A549 (cell line): ENCODE measurements at regions of chr16 and their contacts with region 1.

Region 1: DNA sequence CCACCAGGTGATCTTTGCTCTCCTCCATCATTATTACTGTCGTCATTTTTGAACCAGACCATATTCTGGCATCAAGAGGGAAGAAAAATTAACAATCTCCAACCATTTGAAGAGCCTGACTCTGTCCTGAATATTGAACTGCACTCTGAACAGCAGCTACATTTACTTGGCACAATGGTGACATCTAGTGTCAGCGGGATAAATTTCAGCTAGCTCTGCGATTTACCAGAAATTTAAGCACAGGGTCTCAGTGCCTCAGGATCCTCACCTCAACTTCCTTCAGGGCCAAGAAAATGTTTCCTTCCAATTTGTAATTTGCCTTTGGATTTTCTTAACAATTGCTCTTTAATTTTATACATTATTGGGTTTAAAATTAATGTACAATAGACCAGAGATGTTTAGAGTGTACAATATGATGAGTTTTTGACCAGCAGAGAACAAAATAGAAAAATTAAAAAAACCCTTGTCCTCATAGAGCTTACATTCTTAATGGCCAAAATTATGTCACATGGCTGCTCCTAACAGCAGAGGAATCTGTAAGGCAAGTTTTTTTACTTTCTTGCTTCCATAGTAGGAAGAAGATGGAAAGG is 10.7 kb upstream of the ZNF19 start:
- DNase-seq: peak; percentile 65 to 67
- ATAC-seq: peak; percentile 75 to 90
- H3K4me3 ChIP-seq: no peak overlapping the region
- H3K27ac ChIP-seq: no peak overlapping the region
- H3K4me1 ChIP-seq: 0 out of 3 replicates have a peak, but pooled peaks cover under 1% of the 10 kb centered on the region
- CTCF ChIP-seq: peak; percentile 84
- EP300 ChIP-seq: no peak
- POLR2A ChIP-seq: no peak
- RAD21 ChIP-seq: peak; percentile 82 to 88

Region 2: GRCh38 chr16:71364133-71364681 is 135.7 kb before region 1 on chr16:
- CTCF ChIA-PET with region 1: interaction called, 12 read pairs
- POLR2A ChIA-PET with region 1: no interaction called
- DNase-seq: no peak
- ATAC-seq: no peak
- H3K4me3 ChIP-seq: no peak overlapping the region
- H3K27ac ChIP-seq: no peak overlapping the region
- H3K4me1 ChIP-seq: peaks cover 19% of the 10 kb centered on the region
- CTCF ChIP-seq: no peak
- EP300 ChIP-seq: no peak
- POLR2A ChIP-seq: no peak
- RAD21 ChIP-seq: no peak

Region 3: DNA sequence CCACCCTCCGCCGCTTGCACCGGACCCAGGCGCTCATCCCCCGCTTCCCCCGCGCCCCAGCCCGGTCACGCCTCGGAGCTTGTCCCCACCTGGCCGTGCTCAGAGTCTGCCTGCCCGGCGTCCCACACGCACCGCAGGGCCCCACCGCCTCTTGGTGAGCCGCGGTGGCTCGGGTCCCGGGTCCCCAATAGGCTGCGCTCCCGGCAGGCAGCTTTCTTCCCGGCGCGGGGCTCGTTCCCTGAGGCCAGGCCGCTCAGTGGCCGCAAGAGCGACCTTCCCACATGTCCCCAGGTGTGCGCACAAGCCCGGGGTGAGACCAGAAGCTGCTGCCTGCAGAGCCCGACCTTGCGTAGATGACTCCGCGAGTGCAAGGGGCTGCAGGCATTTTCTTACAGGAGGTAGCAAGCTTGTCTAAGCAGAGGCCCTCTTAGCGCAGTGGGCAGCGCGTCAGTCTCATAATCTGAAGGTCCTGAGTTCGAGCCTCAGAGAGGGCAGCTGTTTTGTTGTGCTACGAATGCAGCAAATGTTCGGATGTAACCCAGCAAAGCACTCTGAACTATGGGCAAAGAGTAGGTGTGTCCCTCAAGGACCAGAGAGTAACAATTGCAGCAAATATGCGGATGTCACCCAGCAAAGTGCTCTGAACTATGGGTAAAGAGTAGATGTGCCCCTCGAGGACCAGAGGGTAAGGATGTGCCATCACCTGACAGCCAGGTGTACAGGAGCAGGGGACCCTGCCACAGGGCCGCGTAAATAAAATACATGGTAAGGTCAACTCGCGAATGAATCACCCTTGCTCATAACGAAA is 73.6 kb before region 1 on chr16:
- CTCF ChIA-PET with region 1: interaction called, 10 read pairs
- POLR2A ChIA-PET with region 1: no interaction called
- DNase-seq: peak; percentile 97 to 98
- ATAC-seq: peak; percentile 94 to 97
- H3K4me3 ChIP-seq: peak overlapping the region; percentile 50
- H3K27ac ChIP-seq: peak overlapping the region; percentile 18 to 69; a peak in 2 of 6 replicates
- H3K4me1 ChIP-seq: peaks cover 5% of the 10 kb centered on the region; the same call in 1 of the 3 replicates
- CTCF ChIP-seq: no peak
- EP300 ChIP-seq: no peak
- POLR2A ChIP-seq: no peak
- RAD21 ChIP-seq: no peak

Region 4: GRCh38 chr16:71484006-71484893 is 15.6 kb before region 1 on chr16:
- CTCF ChIA-PET with region 1: interaction called, 25 read pairs
- POLR2A ChIA-PET with region 1: no interaction called
- DNase-seq: peak; percentile 84 to 95
- ATAC-seq: peak; percentile 97 to 98
- H3K4me3 ChIP-seq: peak overlapping the region; percentile 68
- H3K27ac ChIP-seq: peak overlapping the region; percentile 83 to 92
- H3K4me1 ChIP-seq: peaks cover 3% of the 10 kb centered on the region; the same call in 1 of the 3 replicates
- CTCF ChIP-seq: no peak
- EP300 ChIP-seq: no peak
- POLR2A ChIP-seq: peak; percentile 52
- RAD21 ChIP-seq: no peak

Region 5: DNA sequence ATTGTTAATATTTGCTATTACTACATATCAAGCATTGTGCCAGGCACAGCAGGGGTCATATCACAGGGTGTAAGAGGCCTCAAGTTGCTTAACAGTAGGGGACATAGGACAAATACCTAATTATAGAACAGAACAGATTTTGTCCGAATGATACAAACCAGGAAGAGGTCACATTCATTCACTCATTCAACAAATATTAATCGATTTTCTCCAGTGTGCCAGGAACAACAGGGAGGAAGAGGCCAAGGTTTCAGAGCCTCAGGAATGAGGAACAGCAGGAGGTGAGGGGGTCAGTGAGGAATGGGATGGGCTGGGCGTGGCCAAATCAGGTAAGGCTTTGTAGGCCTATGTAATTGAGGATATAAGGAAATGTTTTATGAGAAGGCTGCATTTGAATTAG is 15.2 kb after region 1 on chr16:
- CTCF ChIA-PET with region 1: interaction called, 16 read pairs
- POLR2A ChIA-PET with region 1: no interaction called
- DNase-seq: no peak
- ATAC-seq: no peak
- H3K4me3 ChIP-seq: no peak overlapping the region
- H3K27ac ChIP-seq: no peak overlapping the region
- H3K4me1 ChIP-seq: no peaks in the 10 kb centered on the region
- CTCF ChIP-seq: no peak
- EP300 ChIP-seq: no peak
- POLR2A ChIP-seq: no peak
- RAD21 ChIP-seq: no peak

Region 6: GRCh38 chr16:71532366-71532765 is 32.5 kb after region 1 on chr16:
- CTCF ChIA-PET with region 1: interaction called, 23 read pairs
- POLR2A ChIA-PET with region 1: no interaction called
- DNase-seq: no peak
- ATAC-seq: no peak
- H3K4me3 ChIP-seq: no peak overlapping the region
- H3K27ac ChIP-seq: no peak overlapping the region
- H3K4me1 ChIP-seq: no peaks in the 10 kb centered on the region
- CTCF ChIP-seq: no peak
- EP300 ChIP-seq: no peak
- POLR2A ChIP-seq: no peak
- RAD21 ChIP-seq: no peak

Region 7: DNA sequence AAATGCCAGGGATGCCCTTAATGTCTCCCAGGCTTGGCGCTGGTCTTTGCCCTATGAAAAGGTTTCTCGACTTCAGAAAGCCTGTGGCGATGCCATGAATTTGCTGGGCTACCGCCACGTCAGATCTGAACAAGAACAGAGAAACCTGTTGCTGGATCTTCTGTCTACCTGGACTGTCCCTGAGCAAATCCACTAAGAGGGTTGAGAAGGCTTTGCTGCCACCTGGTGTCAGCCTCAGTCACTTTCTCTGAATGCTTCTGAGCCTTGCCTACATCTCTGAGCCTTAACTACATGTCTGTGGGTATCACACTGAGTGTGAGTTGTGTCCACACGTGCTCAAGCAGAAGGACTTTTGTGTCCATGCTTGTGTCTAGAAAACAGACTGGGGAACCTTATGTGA is 37.8 kb after region 1 on chr16:
- CTCF ChIA-PET with region 1: interaction called, 14 read pairs
- POLR2A ChIA-PET with region 1: no interaction called
- DNase-seq: peak; percentile 63 to 64
- ATAC-seq: peak; percentile 92 to 93
- H3K4me3 ChIP-seq: no peak overlapping the region
- H3K27ac ChIP-seq: no peak overlapping the region
- H3K4me1 ChIP-seq: no peaks in the 10 kb centered on the region
- CTCF ChIP-seq: peak; percentile 63
- EP300 ChIP-seq: no peak
- POLR2A ChIP-seq: no peak
- RAD21 ChIP-seq: peak; percentile 61 to 71

Region 8: DNA sequence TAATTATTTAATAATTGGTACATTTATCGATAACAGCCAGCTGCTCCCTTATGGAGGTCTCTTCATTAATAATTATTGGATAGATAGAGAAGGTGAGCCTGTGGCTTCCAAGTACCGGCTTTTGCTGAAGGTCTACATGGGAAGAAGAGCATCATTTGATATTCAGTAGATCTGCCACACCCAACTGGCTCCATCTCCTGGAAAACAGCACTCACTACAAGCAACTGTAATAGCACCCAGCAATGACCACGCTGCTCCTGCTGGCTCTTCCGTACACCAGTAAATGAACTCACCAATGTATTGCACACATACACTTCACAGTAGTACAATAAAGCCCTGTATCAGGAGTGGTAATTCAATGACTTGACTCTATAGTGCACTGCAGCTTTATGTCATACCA is 145.6 kb after region 1 on chr16:
- CTCF ChIA-PET with region 1: no interaction called
- POLR2A ChIA-PET with region 1: no interaction called
- DNase-seq: peak; percentile 63 to 70
- ATAC-seq: peak; percentile 90 to 91
- H3K4me3 ChIP-seq: no peak overlapping the region
- H3K27ac ChIP-seq: no peak overlapping the region
- H3K4me1 ChIP-seq: no peaks in the 10 kb centered on the region
- CTCF ChIP-seq: peak; percentile 39
- EP300 ChIP-seq: no peak
- POLR2A ChIP-seq: no peak
- RAD21 ChIP-seq: peak; percentile 18 to 44; a peak in 2 of 5 replicates

Region 9: DNA sequence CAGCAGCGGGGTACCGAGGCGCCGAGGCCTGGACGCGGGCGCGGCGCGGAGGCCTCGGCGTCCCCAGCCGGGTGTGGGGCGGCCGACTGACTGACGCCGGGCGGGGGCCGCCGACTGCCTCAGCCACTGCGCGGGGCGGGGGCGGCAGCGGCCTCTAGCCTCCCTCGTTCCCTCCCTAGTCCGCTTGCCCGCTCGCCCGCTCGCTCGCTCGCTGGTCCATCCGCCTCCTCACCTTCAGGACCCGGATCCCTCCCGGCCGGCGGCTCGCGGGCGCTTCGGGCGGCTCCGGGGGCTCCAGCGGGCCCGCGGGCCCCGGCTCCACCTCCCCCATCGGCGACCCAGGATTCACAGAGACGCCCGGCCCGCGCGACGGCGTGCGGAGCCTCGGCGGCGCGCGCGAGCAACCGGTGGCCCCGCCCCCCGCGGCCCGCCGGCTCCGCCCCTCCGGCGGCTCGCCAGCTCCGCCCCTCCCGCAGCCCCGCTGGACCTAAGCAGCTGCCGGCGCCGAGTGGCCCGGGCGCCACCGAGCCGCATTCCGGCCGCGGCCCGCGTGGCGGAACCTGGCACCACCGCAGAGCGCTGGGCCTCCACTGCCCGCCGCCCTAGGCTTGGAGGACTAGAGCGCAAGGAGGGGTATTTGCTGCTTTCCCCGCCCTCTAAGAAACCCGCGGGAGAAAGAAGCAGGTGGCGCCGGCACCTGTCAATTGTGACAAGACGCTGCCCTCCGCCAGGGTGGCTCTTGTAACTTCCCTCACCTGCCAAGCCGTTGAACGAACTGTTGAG is 223.9 kb after region 1 on chr16:
- CTCF ChIA-PET with region 1: no interaction called
- POLR2A ChIA-PET with region 1: no interaction called
- DNase-seq: peak; percentile 63 to 72
- ATAC-seq: peak; percentile 61 to 77
- H3K4me3 ChIP-seq: peak overlapping the region; percentile 76
- H3K27ac ChIP-seq: peak overlapping the region; percentile 83 to 97
- H3K4me1 ChIP-seq: peaks cover 16% of the 10 kb centered on the region
- CTCF ChIP-seq: no peak
- EP300 ChIP-seq: no peak
- POLR2A ChIP-seq: 0 out of 2 replicates have a peak, but pooled peaks have one; percentile 22
- RAD21 ChIP-seq: no peak